ENCODE measurements at regions of chr6 and their contacts with region 1.

Region 1: DNA sequence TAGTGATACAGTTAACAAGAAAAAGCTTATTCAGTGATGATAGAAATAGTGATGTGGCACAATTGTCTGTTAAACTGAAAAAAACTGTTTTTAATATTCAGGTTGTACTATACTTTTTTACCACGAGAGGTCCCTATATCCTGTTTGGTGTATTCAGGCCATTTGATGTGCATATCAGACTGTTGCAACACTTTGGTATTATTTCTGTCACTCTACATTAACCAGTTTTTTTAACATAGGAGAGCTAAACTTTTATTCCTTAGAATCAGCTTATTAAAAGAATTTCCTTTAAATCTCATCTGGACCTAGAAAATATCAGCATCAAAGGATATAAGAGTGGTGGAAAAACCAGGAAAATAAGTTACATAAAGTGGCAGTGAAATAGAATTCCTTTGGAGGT is 36.8 kb downstream of the TSPYL4 start:
- DNase-seq: no peak
- H3K4me3 Mint-ChIP-seq: no peak overlapping the region
- H3K27ac Mint-ChIP-seq: no peak overlapping the region
- H3K4me1 Mint-ChIP-seq: no peaks in the 10 kb centered on the region
- H3K27me3 Mint-ChIP-seq: no peaks in the 10 kb centered on the region

Region 2: DNA sequence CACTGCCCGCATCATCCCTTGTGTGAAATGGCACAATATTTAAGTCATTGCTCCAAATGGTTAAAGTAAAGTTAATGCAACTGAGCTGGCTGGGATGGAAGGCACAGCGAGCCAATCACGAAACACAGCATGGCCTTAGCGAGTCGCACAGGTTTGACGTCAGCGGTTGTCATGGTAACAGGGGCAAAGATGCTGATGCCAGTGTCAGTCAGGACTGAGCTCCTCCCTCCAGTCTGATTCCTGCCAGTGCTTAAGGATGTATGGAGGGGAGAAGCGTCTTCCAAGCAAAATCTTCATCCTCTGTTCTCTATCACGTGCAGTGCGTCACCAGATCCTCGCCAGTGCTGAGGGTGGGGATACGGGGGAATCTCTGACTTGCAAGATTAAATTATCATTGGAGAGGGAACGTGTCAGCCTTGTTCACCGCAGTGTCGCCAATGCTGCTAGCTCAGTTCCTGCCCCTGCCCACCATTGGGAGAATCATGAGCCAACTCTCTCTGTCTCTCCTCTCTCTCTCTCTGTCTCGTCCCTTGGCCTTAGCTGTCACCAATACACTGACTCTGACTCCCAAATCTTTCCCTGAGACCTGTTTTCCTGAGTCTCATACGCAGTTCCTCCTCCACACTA is 12.3 kb after region 1 on chr6:
- CTCF ChIA-PET with region 1: interaction called, 27 read pairs
- POLR2A ChIA-PET with region 1: interaction called, 4 read pairs
- intact Hi-C with region 1: no loop called
- DNase-seq: peak; percentile 41
- H3K4me3 Mint-ChIP-seq: no peak overlapping the region
- H3K27ac Mint-ChIP-seq: no peak overlapping the region
- H3K4me1 Mint-ChIP-seq: no peaks in the 10 kb centered on the region
- H3K27me3 Mint-ChIP-seq: no peaks in the 10 kb centered on the region

Region 3: GRCh38 chr6:116253505-116254296 is 36.6 kb after region 1 on chr6 and contains the start of gene TSPYL4:
- CTCF ChIA-PET with region 1: interaction called, 14 read pairs
- POLR2A ChIA-PET with region 1: no interaction called
- intact Hi-C with region 1: no loop called
- DNase-seq: peak; percentile 95
- H3K4me3 Mint-ChIP-seq: no peak within 1 kb of the TSS
- H3K27ac Mint-ChIP-seq: no peak within 1 kb of the TSS
- H3K4me1 Mint-ChIP-seq: peaks cover 8% of the 10 kb centered on the region
- H3K27me3 Mint-ChIP-seq: no peaks in the 10 kb centered on the region
- total RNA-seq, gene TSPYL4: 10.5 to 11.1 TPM

Measured in activated CD4-positive, alpha-beta memory T cell treated with anti-CD3 and anti-CD28 coated beads for 36 hours (primary cell).